CD8-positive, alpha-beta T cell (primary cell): ENCODE measurements at regions of chr10 and their contacts with region 1.

Region 1: DNA sequence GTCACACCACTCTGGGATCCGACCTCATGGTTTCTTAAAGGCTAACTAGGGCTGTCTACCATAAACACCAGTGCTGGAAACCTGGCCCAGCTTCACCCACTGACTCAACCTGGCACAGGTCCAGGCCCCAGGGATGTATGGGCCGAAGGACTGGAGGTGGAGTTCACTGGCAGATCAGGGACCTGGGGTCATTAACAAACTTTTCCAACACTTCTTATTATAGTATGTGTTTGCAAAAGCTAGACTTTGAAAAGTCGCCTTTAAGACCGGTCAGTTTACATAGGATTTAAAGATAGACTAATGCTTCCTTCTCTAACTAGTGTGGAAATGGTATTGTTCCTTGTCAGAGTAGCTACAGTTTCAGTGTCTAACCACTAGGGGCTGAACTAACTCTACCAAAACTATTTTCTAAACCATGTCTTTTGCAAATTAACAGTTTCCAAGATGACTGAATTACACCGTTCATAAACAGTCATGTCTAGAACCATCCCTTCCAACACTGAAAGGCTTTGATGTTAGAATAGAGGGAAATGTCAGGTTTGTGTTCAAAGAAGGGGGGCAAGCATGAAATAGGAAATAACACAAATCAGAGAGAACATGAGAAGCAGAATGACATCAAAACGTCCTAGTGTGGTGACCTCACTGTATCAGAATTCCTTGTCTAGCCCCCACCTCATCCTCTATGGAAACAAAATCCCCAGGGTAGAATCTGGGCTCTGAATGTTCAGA is 29.7 kb downstream of the STN1 start:
- DNase-seq: peak in 3 of 9 experiments; percentile 15 to 75 (median 61)
- ATAC-seq: peak; percentile 92
- H3K4me3 ChIP-seq: no peak overlapping the region
- H3K4me3 Mint-ChIP-seq: no peak overlapping the region
- H3K27ac ChIP-seq: no peak overlapping the region
- H3K27ac Mint-ChIP-seq: peak overlapping the region; percentile 65
- H3K4me1 ChIP-seq: peaks cover 12% of the 10 kb centered on the region
- H3K4me1 Mint-ChIP-seq: peaks cover 23% of the 10 kb centered on the region
- H3K27me3 ChIP-seq: no peaks in the 10 kb centered on the region
- H3K27me3 Mint-ChIP-seq: no peaks in the 10 kb centered on the region
- CTCF ChIP-seq: peak; percentile 83

Region 2: DNA sequence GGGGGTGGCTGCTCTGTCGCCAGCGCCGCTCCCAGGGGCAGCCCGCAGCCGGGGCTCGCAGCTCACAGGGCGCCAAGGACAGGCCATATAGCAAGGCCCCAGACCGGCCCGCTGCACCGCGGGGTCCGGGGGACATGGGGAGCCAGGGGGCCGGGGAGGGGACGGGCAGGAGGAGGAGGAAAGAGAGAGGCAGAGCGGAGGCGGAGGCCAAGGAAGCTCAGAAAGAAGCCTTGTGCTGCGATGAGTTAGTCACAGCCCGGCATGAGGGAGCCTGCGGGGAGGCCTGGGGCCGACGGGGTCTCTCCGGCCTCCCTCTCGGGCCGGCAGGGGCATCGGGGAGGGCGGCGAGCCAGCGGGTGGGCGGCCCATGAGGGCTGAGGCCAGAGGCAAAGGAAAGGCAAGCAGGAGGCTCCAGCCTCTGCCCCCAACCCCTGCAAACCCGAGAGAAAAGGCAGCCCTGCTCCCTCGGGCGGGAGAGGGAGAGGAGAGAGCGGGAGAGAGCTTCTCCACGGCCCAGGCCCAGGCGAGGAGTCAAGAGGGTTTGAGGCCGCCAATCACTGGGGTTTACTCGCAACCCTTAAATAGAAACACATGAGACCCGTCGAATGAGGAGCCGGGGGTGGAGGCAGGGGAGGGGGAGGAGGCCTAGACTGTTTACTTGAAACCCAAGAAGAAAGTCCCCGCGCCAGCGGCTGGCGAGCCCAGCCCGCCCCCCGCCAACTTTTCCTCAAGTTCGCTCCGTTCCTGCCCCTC is 226.9 kb before region 1 on chr10:
- CTCF ChIA-PET with region 1: no interaction called
- POLR2A ChIA-PET with region 1: no interaction called
- intact Hi-C with region 1: no loop called
- DNase-seq: peak in 8 of 9 experiments; percentile 16 to 78 (median 62)
- ATAC-seq: peak; percentile 76
- H3K4me3 ChIP-seq: peak overlapping the region; percentile 38 to 99
- H3K4me3 Mint-ChIP-seq: peak overlapping the region; percentile 87
- H3K27ac ChIP-seq: peak overlapping the region; percentile 62 to 76
- H3K27ac Mint-ChIP-seq: peak overlapping the region; percentile 90
- H3K4me1 ChIP-seq: peaks cover 16% of the 10 kb centered on the region
- H3K4me1 Mint-ChIP-seq: peaks cover 11% of the 10 kb centered on the region
- H3K27me3 ChIP-seq: no peaks in the 10 kb centered on the region
- H3K27me3 Mint-ChIP-seq: no peaks in the 10 kb centered on the region
- CTCF ChIP-seq: no peak

Region 3: DNA sequence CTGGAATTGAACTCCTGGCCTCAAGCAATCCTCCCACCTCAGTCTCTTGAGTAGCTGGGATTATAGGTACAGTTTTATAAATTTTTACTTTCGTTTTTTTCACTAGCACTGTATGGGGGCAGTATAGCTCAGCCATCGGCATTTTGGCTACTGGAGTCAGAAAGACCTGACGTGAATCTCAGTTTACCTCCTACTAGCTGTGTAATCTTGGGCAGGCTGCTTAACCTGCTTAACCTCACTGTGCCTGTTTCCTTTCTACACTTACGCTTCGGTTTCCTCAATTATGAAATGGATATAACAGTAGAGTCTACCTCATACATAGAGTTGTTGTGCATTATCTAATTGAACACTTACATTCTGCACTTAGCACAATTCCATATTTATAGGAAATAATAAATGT is 13.0 kb after region 1 on chr10:
- CTCF ChIA-PET with region 1: interaction called, 19 read pairs
- POLR2A ChIA-PET with region 1: interaction called, 3 read pairs
- intact Hi-C with region 1: loop called in 1 of 2 experiments (anchors 2 kb)
- DNase-seq: peak in 3 of 9 experiments; percentile 23 to 52 (median 45)
- ATAC-seq: peak; percentile 78
- H3K4me3 ChIP-seq: peak overlapping the region in 1 of 2 experiments; percentile 3
- H3K4me3 Mint-ChIP-seq: peak overlapping the region; percentile 76
- H3K27ac ChIP-seq: no peak overlapping the region
- H3K27ac Mint-ChIP-seq: peak overlapping the region; percentile 83
- H3K4me1 ChIP-seq: peaks cover 53% of the 10 kb centered on the region
- H3K4me1 Mint-ChIP-seq: peaks cover 50% of the 10 kb centered on the region
- H3K27me3 ChIP-seq: no peaks in the 10 kb centered on the region
- H3K27me3 Mint-ChIP-seq: no peaks in the 10 kb centered on the region
- CTCF ChIP-seq: no peak

Region 4: GRCh38 chr10:103990121-103990520 is 101.8 kb after region 1 on chr10:
- CTCF ChIA-PET with region 1: interaction called, 6 read pairs
- POLR2A ChIA-PET with region 1: no interaction called
- intact Hi-C with region 1: loop called in 1 of 2 experiments (anchors 5 kb)
- DNase-seq: peak in 1 of 9 experiments; percentile 7
- ATAC-seq: no peak
- H3K4me3 ChIP-seq: no peak overlapping the region
- H3K4me3 Mint-ChIP-seq: no peak overlapping the region
- H3K27ac ChIP-seq: no peak overlapping the region
- H3K27ac Mint-ChIP-seq: no peak overlapping the region
- H3K4me1 ChIP-seq: peaks cover 15% of the 10 kb centered on the region
- H3K4me1 Mint-ChIP-seq: peaks cover 51% of the 10 kb centered on the region
- H3K27me3 ChIP-seq: no peaks in the 10 kb centered on the region
- H3K27me3 Mint-ChIP-seq: no peaks in the 10 kb centered on the region
- CTCF ChIP-seq: no peak

Region 5: GRCh38 chr10:104028146-104028545 is 139.9 kb after region 1 on chr10:
- CTCF ChIA-PET with region 1: interaction called, 10 read pairs
- POLR2A ChIA-PET with region 1: no interaction called
- intact Hi-C with region 1: loop called in 1 of 2 experiments (anchors 5 kb)
- DNase-seq: peak in 2 of 9 experiments; percentile 20 to 29
- ATAC-seq: peak; percentile 49
- H3K4me3 ChIP-seq: no peak overlapping the region
- H3K4me3 Mint-ChIP-seq: no peak overlapping the region
- H3K27ac ChIP-seq: no peak overlapping the region
- H3K27ac Mint-ChIP-seq: peak overlapping the region; percentile 24
- H3K4me1 ChIP-seq: no peaks in the 10 kb centered on the region
- H3K4me1 Mint-ChIP-seq: no peaks in the 10 kb centered on the region
- H3K27me3 ChIP-seq: no peaks in the 10 kb centered on the region
- H3K27me3 Mint-ChIP-seq: no peaks in the 10 kb centered on the region
- CTCF ChIP-seq: no peak

Region 6: DNA sequence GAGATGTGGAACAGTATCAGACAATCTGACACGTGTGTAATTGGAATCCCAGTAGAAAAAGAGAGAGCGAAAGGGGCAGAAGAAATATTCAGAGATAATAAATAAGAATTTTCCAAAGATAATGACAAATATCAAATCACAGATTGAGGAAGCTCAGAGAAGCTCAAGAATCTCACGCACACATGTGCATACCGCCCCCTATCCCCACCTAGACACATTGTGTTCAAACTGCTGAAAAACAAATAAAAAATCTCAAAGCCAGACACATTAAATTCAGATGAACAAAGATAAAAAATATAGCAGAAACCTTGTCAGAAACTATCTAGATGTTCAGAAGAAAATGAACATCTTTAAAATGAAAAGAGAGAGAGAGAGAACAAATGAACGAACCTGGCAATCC is 250.9 kb after region 1 on chr10:
- CTCF ChIA-PET with region 1: interaction called, 5 read pairs
- POLR2A ChIA-PET with region 1: no interaction called
- intact Hi-C with region 1: loop called in 1 of 2 experiments (anchors 5 kb)
- DNase-seq: peak in 2 of 9 experiments; percentile 31 to 47
- ATAC-seq: no peak
- H3K4me3 ChIP-seq: no peak overlapping the region
- H3K4me3 Mint-ChIP-seq: no peak overlapping the region
- H3K27ac ChIP-seq: no peak overlapping the region
- H3K27ac Mint-ChIP-seq: no peak overlapping the region
- H3K4me1 ChIP-seq: no peaks in the 10 kb centered on the region
- H3K4me1 Mint-ChIP-seq: no peaks in the 10 kb centered on the region
- H3K27me3 ChIP-seq: no peaks in the 10 kb centered on the region
- H3K27me3 Mint-ChIP-seq: peaks cover 19% of the 10 kb centered on the region
- CTCF ChIP-seq: peak; percentile 35